Colonic mucosa (tissue), 4 donors: ENCODE measurements at regions of chr16 and their contacts with region 1.

Region 1: GRCh38 chr16:1610276-1611017 is 1.4 kb downstream of the IFT140 start:
- DNase-seq: peak; percentile 88
- H3K4me3 ChIP-seq: peak overlapping the region; percentile 98
- H3K27ac ChIP-seq: peak overlapping the region; percentile 82
- H3K4me1 ChIP-seq: peaks cover 6% of the 10 kb centered on the region
- H3K27me3 ChIP-seq: no peaks in the 10 kb centered on the region
- CTCF ChIP-seq: no peak

Region 2: GRCh38 chr16:1288611-1289474 is 321.6 kb before region 1 on chr16:
- intact Hi-C with region 1: no loop called
- DNase-seq: no peak
- H3K4me3 ChIP-seq: no peak overlapping the region
- H3K27ac ChIP-seq: no peak overlapping the region
- H3K4me1 ChIP-seq: peaks cover 3% of the 10 kb centered on the region
- H3K27me3 ChIP-seq: peaks cover 21% of the 10 kb centered on the region
- CTCF ChIP-seq: no peak

Region 3: GRCh38 chr16:1492923-1493745 is 117.3 kb before region 1 on chr16 and contains the start of gene TELO2:
- intact Hi-C with region 1: loop called (anchors 10 kb)
- DNase-seq: peak; percentile 86
- H3K4me3 ChIP-seq: peak within 1 kb of the TSS; percentile 91
- H3K27ac ChIP-seq: peak within 1 kb of the TSS; percentile 73
- H3K4me1 ChIP-seq: peaks cover 8% of the 10 kb centered on the region
- H3K27me3 ChIP-seq: no peaks in the 10 kb centered on the region
- CTCF ChIP-seq: no peak
- total RNA-seq, gene TELO2: 18.4 to 76.0 TPM

Region 4: GRCh38 chr16:1772736-1773584 is 162.5 kb after region 1 on chr16 and contains the starts of genes EME2 and MRPS34:
- intact Hi-C with region 1: loop called (anchors 5 kb)
- DNase-seq: peak; percentile 85
- H3K4me3 ChIP-seq: peak within 1 kb of the TSS; percentile 96
- H3K27ac ChIP-seq: peak within 1 kb of the TSS; percentile 98
- H3K4me1 ChIP-seq: peaks cover 11% of the 10 kb centered on the region
- H3K27me3 ChIP-seq: no peaks in the 10 kb centered on the region
- CTCF ChIP-seq: peak; percentile 81
- total RNA-seq, gene EME2: 16.7 to 30.6 TPM
- total RNA-seq, gene MRPS34: 106 to 227 TPM